Activated naive CD4-positive, alpha-beta T cell treated with anti-CD3 and anti-CD28 coated beads, Interleukin-2, amount 10 ng/mL, durations not matched to agents 7 days and 5 days (primary cell): ENCODE measurements at regions of chr11 and their contacts with region 1.

Region 1: GRCh38 chr11:119356349-119357031 is 10.0 kb upstream of the MFRP start:
- DNase-seq: peak; percentile 83
- H3K4me3 Mint-ChIP-seq: peak overlapping the region; percentile 85
- H3K27ac Mint-ChIP-seq: peak overlapping the region; percentile 69
- H3K4me1 Mint-ChIP-seq: peaks cover 21% of the 10 kb centered on the region
- H3K27me3 Mint-ChIP-seq: peaks cover 85% of the 10 kb centered on the region

Region 2: GRCh38 chr11:119236490-119236889 is 120.0 kb before region 1 on chr11:
- CTCF ChIA-PET with region 1: no interaction called
- DNase-seq: no peak
- H3K4me3 Mint-ChIP-seq: no peak overlapping the region
- H3K27ac Mint-ChIP-seq: no peak overlapping the region
- H3K4me1 Mint-ChIP-seq: peaks cover 35% of the 10 kb centered on the region
- H3K27me3 Mint-ChIP-seq: no peaks in the 10 kb centered on the region

Region 3: DNA sequence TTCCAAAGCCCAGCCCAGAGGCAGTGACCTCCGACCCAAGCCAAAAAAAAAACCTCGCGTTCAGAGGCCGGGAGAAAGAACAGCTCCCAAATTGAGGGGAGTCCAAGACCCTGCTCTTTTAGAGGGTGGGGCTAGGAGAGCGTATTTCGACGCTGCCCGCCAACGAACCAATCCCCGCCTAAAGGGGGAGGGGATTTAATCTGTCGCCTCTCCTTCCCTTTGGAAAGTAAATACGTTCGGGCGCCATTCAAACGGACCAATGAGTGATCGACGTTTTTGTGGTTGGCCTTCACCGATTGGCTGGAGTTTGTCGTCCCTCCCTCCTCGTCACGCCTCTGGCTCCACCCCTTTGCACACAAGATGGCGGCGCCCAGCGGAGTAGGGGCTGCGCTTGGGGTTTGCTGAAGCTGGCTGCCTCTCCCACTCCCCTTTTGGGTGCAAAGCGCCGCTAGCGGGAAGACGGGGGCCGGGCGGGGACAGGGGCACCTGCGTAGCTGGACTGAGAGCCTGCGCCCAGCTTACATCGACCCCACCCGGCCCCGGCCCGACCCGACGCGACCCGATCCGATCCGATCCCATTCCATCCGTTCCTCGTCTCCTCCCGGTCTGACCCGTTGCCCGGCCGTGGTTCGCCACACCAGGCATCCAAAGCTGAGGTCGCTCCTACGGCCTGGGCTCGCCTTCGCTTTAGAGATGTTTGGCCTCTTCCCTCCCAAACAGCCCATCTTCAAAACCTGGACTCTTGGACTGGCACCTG is 22.1 kb before region 1 on chr11 and contains the start of gene RNF26:
- CTCF ChIA-PET with region 1: interaction called, 22 read pairs
- DNase-seq: peak; percentile 97
- H3K4me3 Mint-ChIP-seq: peak within 1 kb of the TSS; percentile 99
- H3K27ac Mint-ChIP-seq: peak within 1 kb of the TSS; percentile 97
- H3K4me1 Mint-ChIP-seq: peaks cover 62% of the 10 kb centered on the region
- H3K27me3 Mint-ChIP-seq: peaks cover 25% of the 10 kb centered on the region

Region 4: GRCh38 chr11:119339589-119340343 is 16.7 kb before region 1 on chr11:
- CTCF ChIA-PET with region 1: interaction called, 22 read pairs
- DNase-seq: peak; percentile 55
- H3K4me3 Mint-ChIP-seq: no peak overlapping the region
- H3K27ac Mint-ChIP-seq: no peak overlapping the region
- H3K4me1 Mint-ChIP-seq: peaks cover 51% of the 10 kb centered on the region
- H3K27me3 Mint-ChIP-seq: peaks cover 67% of the 10 kb centered on the region

Region 5: DNA sequence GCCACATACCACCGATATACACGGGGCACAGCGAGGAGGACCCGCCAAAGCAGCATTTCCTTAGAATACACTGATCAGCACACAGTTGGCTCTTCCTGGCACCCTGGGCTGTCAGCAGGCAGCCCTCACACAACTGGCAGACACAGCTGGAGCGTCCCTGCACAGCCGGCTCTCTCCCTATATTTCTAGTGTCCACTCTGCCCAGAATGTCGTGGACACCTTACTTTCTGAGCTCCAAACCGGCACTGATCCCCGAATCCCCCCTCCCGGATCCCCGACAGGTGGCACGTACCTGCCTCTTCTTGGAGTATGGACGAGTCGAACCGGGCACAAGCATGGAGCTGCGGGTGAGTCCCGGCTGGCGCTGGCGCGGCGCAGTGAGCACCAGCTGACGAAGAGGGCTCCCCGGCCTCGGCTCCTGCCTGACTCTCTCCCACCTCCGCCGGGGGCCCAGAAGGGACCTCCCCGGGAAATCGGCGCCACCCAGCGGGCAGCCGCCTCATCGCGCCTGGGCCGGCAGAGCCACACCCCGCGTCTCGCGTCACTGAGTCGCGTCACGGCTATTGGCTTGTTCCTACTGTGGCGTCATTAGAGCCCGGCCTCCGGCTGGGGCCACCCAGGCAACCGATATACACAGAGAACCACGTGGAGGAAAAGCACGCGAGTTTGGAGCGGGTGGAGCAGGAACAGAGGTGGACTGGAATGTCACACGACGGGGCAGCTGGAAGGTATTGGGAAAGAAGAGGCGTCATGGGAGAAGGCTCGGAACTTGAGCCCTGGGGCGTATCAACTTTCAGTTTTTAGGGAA is 24.9 kb after region 1 on chr11 and contains the start of gene USP2:
- CTCF ChIA-PET with region 1: interaction called, 184 read pairs
- DNase-seq: peak; percentile 97
- H3K4me3 Mint-ChIP-seq: no peak within 1 kb of the TSS
- H3K27ac Mint-ChIP-seq: no peak within 1 kb of the TSS
- H3K4me1 Mint-ChIP-seq: peaks cover 8% of the 10 kb centered on the region
- H3K27me3 Mint-ChIP-seq: peaks cover 34% of the 10 kb centered on the region

Region 6: GRCh38 chr11:119533921-119534736 is 177.6 kb after region 1 on chr11:
- CTCF ChIA-PET with region 1: no interaction called
- DNase-seq: peak; percentile 64
- H3K4me3 Mint-ChIP-seq: no peak overlapping the region
- H3K27ac Mint-ChIP-seq: no peak overlapping the region
- H3K4me1 Mint-ChIP-seq: no peaks in the 10 kb centered on the region
- H3K27me3 Mint-ChIP-seq: peaks cover 29% of the 10 kb centered on the region